CD8-positive, alpha-beta memory T cell (primary cell): ENCODE measurements at regions of chr19 and their contacts with region 1.

Region 1: GRCh38 chr19:45439569-45440254 is 16.0 kb upstream of the ERCC1 start:
- DNase-seq: peak; percentile 80 to 92 (median 88)
- H3K4me3 ChIP-seq: peak overlapping the region; percentile 47
- H3K4me3 Mint-ChIP-seq: peak overlapping the region; percentile 63 to 84 (median 75)
- H3K27ac ChIP-seq: peak overlapping the region; percentile 76
- H3K27ac Mint-ChIP-seq: peak overlapping the region; percentile 74 to 94 (median 90)
- H3K4me1 ChIP-seq: peaks cover 35% of the 10 kb centered on the region
- H3K4me1 Mint-ChIP-seq: peaks cover 33 to 36% (median 35%) of the 10 kb centered on the region in 3 donors
- H3K27me3 ChIP-seq: no peaks in the 10 kb centered on the region
- H3K27me3 Mint-ChIP-seq: no peaks in the 10 kb centered on the region

Region 2: GRCh38 chr19:45409557-45409920 is 30.2 kb before region 1 on chr19:
- CTCF ChIA-PET with region 1: no interaction called
- POLR2A ChIA-PET with region 1: no interaction called
- DNase-seq: no peak
- H3K4me3 ChIP-seq: no peak overlapping the region
- H3K4me3 Mint-ChIP-seq: no peak overlapping the region
- H3K27ac ChIP-seq: no peak overlapping the region
- H3K27ac Mint-ChIP-seq: no peak overlapping the region
- H3K4me1 ChIP-seq: peaks cover 18% of the 10 kb centered on the region
- H3K4me1 Mint-ChIP-seq: peaks cover 18 to 28% (median 24%) of the 10 kb centered on the region in 3 donors
- H3K27me3 ChIP-seq: peaks cover 7% of the 10 kb centered on the region
- H3K27me3 Mint-ChIP-seq: peaks cover 8 to 9% of the 10 kb centered on the region in 2 donors

Region 3: DNA sequence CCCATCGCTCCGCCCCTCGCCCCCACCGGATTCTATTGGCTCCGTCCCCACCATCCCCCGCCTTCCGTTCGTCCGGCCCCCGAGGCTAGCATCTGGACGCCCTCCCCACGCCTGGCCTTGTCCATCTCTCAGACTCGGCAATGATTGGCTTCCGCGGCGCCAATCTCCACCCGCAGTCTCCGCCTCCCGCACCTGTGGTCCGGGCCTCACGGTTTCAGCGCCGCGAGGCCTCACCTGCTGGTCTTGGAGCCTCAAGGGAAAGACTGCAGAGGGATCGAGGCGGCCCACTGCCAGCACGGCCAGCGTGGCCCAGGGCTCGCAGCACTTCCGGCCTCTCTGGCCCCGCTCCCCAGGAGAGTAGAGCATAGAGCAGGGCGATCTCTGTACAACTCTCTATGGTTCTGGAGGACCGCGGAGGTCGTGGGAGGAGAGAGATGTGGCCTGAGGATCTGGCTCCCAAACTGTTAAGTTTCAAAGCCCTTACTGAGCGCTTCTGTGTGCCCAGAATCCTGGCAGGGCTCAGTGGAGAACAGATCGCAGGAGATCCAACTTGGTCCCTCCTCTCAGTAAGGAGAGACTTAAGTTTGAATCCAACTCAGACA is 16.0 kb before region 1 on chr19 and contains the start of gene ERCC1:
- CTCF ChIA-PET with region 1: interaction called, 27 read pairs
- POLR2A ChIA-PET with region 1: interaction called, 3 read pairs
- DNase-seq: peak in 3 of 5 donors; percentile 81 to 88 (median 86)
- H3K4me3 ChIP-seq: peak within 1 kb of the TSS; percentile 80
- H3K4me3 Mint-ChIP-seq: peak within 1 kb of the TSS; percentile 85 to 99 (median 91)
- H3K27ac ChIP-seq: peak within 1 kb of the TSS; percentile 79
- H3K27ac Mint-ChIP-seq: peak within 1 kb of the TSS; percentile 63 to 97 (median 92)
- H3K4me1 ChIP-seq: peaks cover 26% of the 10 kb centered on the region
- H3K4me1 Mint-ChIP-seq: peaks cover 41 to 65% (median 46%) of the 10 kb centered on the region in 3 donors
- H3K27me3 ChIP-seq: no peaks in the 10 kb centered on the region
- H3K27me3 Mint-ChIP-seq: peaks cover 0 to 2% of the 10 kb centered on the region in 2 donors
- total RNA-seq, gene ERCC1: 75.7 to 82.6 TPM

Region 4: GRCh38 chr19:45469132-45469944 is 29.6 kb after region 1 on chr19:
- CTCF ChIA-PET with region 1: interaction called, 455 read pairs
- POLR2A ChIA-PET with region 1: interaction called, 30 read pairs
- DNase-seq: peak; percentile 78 to 98 (median 93)
- H3K4me3 ChIP-seq: peak overlapping the region; percentile 96
- H3K4me3 Mint-ChIP-seq: peak overlapping the region; percentile 93 to 99 (median 95)
- H3K27ac ChIP-seq: peak overlapping the region; percentile 100
- H3K27ac Mint-ChIP-seq: peak overlapping the region; percentile 98 to 99 (median 99)
- H3K4me1 ChIP-seq: peaks cover 18% of the 10 kb centered on the region
- H3K4me1 Mint-ChIP-seq: peaks cover 26 to 53% (median 29%) of the 10 kb centered on the region in 3 donors
- H3K27me3 ChIP-seq: no peaks in the 10 kb centered on the region
- H3K27me3 Mint-ChIP-seq: peaks cover 10 to 61% of the 10 kb centered on the region in 2 donors

Region 5: GRCh38 chr19:45478454-45479238 is 38.9 kb after region 1 on chr19:
- CTCF ChIA-PET with region 1: interaction called, 455 read pairs
- POLR2A ChIA-PET with region 1: interaction called, 89 read pairs
- DNase-seq: peak; percentile 80 to 92 (median 89)
- H3K4me3 ChIP-seq: peak overlapping the region; percentile 80
- H3K4me3 Mint-ChIP-seq: peak overlapping the region; percentile 87 to 96 (median 91)
- H3K27ac ChIP-seq: peak overlapping the region; percentile 96
- H3K27ac Mint-ChIP-seq: peak overlapping the region; percentile 97 to 100 (median 99)
- H3K4me1 ChIP-seq: peaks cover 16% of the 10 kb centered on the region
- H3K4me1 Mint-ChIP-seq: peaks cover 39 to 43% (median 39%) of the 10 kb centered on the region in 3 donors
- H3K27me3 ChIP-seq: no peaks in the 10 kb centered on the region
- H3K27me3 Mint-ChIP-seq: peaks cover 0 to 31% of the 10 kb centered on the region in 2 donors

Region 6: GRCh38 chr19:45485305-45486077 is 45.8 kb after region 1 on chr19:
- CTCF ChIA-PET with region 1: interaction called, 455 read pairs
- POLR2A ChIA-PET with region 1: interaction called, 89 read pairs
- DNase-seq: peak; percentile 92 to 98 (median 95)
- H3K4me3 ChIP-seq: peak overlapping the region; percentile 94
- H3K4me3 Mint-ChIP-seq: peak overlapping the region; percentile 90 to 98 (median 94)
- H3K27ac ChIP-seq: peak overlapping the region; percentile 44
- H3K27ac Mint-ChIP-seq: peak overlapping the region in 7 of 8 donors; percentile 23 to 91 (median 78)
- H3K4me1 ChIP-seq: no peaks in the 10 kb centered on the region
- H3K4me1 Mint-ChIP-seq: peaks cover 8 to 10% (median 10%) of the 10 kb centered on the region in 3 donors
- H3K27me3 ChIP-seq: no peaks in the 10 kb centered on the region
- H3K27me3 Mint-ChIP-seq: peaks cover 0 to 10% of the 10 kb centered on the region in 2 donors

Region 7: GRCh38 chr19:45496349-45496953 is 56.7 kb after region 1 on chr19:
- CTCF ChIA-PET with region 1: interaction called, 89 read pairs
- POLR2A ChIA-PET with region 1: no interaction called
- DNase-seq: peak in 3 of 5 donors; percentile 38 to 71 (median 62)
- H3K4me3 ChIP-seq: peak overlapping the region; percentile 47
- H3K4me3 Mint-ChIP-seq: peak overlapping the region; percentile 33 to 90 (median 82)
- H3K27ac ChIP-seq: no peak overlapping the region
- H3K27ac Mint-ChIP-seq: peak overlapping the region in 3 of 8 donors; percentile 43 to 81 (median 53)
- H3K4me1 ChIP-seq: peaks cover 41% of the 10 kb centered on the region
- H3K4me1 Mint-ChIP-seq: peaks cover 31 to 48% (median 46%) of the 10 kb centered on the region in 3 donors
- H3K27me3 ChIP-seq: peaks cover 15% of the 10 kb centered on the region
- H3K27me3 Mint-ChIP-seq: peaks cover 14 to 22% of the 10 kb centered on the region in 2 donors